ENCODE measurements at regions of chr19 and their contacts with region 1.

Region 1: DNA sequence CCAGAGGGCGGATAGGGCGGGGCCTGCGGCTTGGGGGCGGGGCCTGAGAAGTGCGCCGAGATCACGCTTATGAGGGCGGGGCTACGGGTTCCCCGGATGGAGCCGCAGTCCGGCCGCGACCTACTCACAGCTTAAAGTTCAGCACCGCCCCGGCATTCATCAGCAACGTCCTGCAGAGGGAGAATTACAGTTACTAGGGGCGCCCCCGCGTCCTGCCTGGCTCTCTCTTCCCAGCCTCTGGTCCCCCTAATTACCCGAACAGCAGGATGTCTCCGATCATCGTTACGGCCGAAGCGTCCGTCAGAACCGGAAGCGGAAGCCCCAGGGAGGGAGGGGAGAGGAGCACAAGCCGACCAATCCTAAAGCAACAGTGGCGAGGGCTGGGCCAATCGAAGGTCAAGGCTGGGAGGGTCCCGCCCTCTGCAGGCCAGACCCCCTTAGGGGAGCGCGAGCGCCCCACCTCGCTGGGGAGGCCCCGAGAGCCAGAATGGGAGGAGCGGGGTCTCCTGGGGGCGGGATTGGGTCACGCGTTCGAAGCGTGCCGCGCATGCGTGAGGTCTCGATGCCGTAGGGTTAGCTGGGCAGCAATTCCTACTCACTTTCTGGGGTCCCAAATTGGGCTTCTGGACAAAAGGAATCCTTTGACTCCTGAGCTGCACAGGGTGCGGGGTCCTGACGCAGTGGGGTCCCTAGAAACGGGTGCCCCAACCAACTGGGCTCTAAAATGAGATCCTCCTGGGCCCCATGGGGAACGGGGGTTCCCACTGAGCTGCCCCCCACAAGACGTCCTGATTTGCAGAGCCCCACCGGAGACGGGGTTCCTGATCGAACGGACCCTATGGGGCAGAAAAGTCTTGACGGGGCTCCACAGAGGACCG is at the start of gene SMIM7:
- DNase-seq: peak; percentile 97 to 100 (median 99)

Region 2: GRCh38 chr19:16542045-16542909 is 117.8 kb before region 1 on chr19 and contains the start of gene CHERP:
- intact Hi-C with region 1: loop called (anchors 1 kb)
- DNase-seq: peak; percentile 90 to 99 (median 92)

Region 3: GRCh38 chr19:16572332-16573211 is 87.5 kb before region 1 on chr19 and contains the start of gene SLC35E1:
- intact Hi-C with region 1: loop called (anchors 1 kb)
- DNase-seq: peak; percentile 90 to 99 (median 92)